Naive thymus-derived CD4-positive, alpha-beta T cell (primary cell): ENCODE measurements at regions of chr14 and their contacts with region 1.

Region 1: GRCh38 chr14:58598028-58598803 is 39.5 kb upstream of the DACT1 start:
- DNase-seq: peak in 7 of 9 donors; percentile 54 to 81 (median 74)
- ATAC-seq: peak; percentile 92
- H3K4me3 ChIP-seq: peak overlapping the region; percentile 3
- H3K4me3 Mint-ChIP-seq: peak overlapping the region; percentile 49 to 78 (median 72)
- H3K27ac ChIP-seq: peak overlapping the region; percentile 7
- H3K27ac Mint-ChIP-seq: peak overlapping the region; percentile 42 to 92 (median 72)
- H3K4me1 ChIP-seq: peaks cover 0 to 46% of the 10 kb centered on the region in 2 donors
- H3K4me1 Mint-ChIP-seq: peaks cover 16 to 59% (median 47%) of the 10 kb centered on the region in 7 donors
- H3K27me3 ChIP-seq: no peaks in the 10 kb centered on the region
- H3K27me3 Mint-ChIP-seq: peaks cover 0 to 5% (median 0%) of the 10 kb centered on the region in 5 donors

Region 2: DNA sequence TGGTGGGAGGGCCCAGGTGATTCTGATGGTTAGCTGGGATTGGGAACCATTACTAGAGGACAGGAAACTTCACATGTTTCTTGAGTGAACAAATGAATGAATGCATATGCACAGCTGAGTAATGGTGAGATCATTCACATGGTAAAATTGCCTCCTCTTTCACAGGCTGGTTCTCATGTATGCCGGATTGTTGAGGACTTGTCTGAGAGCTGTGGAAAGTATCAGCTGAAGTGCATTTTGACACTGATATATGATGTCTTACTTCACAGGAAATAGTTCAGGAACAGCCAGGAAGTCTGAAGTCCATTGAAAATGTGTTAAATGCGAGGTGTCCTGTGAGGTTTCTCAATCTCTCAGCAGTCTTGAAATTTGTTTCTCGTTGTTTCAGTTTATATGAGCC is 38.0 kb before region 1 on chr14:
- CTCF ChIA-PET with region 1: no interaction called
- POLR2A ChIA-PET with region 1: no interaction called
- intact Hi-C with region 1: loop called in 1 of 2 experiments (anchors 5 kb)
- DNase-seq: no peak
- ATAC-seq: no peak
- H3K4me3 ChIP-seq: no peak overlapping the region
- H3K4me3 Mint-ChIP-seq: no peak overlapping the region
- H3K27ac ChIP-seq: no peak overlapping the region
- H3K27ac Mint-ChIP-seq: no peak overlapping the region
- H3K4me1 ChIP-seq: peaks cover 0 to 6% of the 10 kb centered on the region in 2 donors
- H3K4me1 Mint-ChIP-seq: peaks cover 0 to 10% (median 4%) of the 10 kb centered on the region in 7 donors
- H3K27me3 ChIP-seq: no peaks in the 10 kb centered on the region
- H3K27me3 Mint-ChIP-seq: no peaks in the 10 kb centered on the region

Region 3: GRCh38 chr14:58626431-58626831 is 28.2 kb after region 1 on chr14:
- CTCF ChIA-PET with region 1: no interaction called
- POLR2A ChIA-PET with region 1: interaction called, 5 read pairs
- intact Hi-C with region 1: loop called in 1 of 2 experiments (anchors 2 kb)
- DNase-seq: no peak
- ATAC-seq: no peak
- H3K4me3 ChIP-seq: no peak overlapping the region
- H3K4me3 Mint-ChIP-seq: no peak overlapping the region
- H3K27ac ChIP-seq: no peak overlapping the region
- H3K27ac Mint-ChIP-seq: no peak overlapping the region
- H3K4me1 ChIP-seq: no peaks in the 10 kb centered on the region
- H3K4me1 Mint-ChIP-seq: peaks cover 4 to 30% (median 15%) of the 10 kb centered on the region in 7 donors
- H3K27me3 ChIP-seq: no peaks in the 10 kb centered on the region
- H3K27me3 Mint-ChIP-seq: peaks cover 0 to 2% (median 0%) of the 10 kb centered on the region in 5 donors